Cardiac septum (tissue), 1 donor: ENCODE measurements at regions of chr4 and their contacts with region 1.

Region 1: DNA sequence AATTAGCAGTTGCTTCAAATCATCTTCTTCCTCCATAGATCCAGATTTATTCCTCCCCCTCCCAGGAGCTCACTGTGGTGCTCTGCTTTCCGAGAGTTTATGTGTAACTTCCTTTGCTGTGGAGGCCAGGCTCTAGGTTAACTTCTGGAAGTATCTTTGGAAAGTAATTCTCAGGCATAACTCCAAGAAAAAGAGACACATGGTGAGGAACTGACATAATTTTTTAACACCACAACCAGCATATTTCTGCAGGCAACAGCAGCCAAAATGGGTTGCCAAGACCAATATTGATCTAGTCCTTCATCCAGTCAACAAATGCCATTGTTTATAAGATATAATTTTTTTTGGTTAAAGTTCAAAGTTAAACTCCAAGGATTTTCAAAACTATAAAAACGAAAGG is 114.5 kb upstream of the RBPJ start:
- DNase-seq: no peak

Region 2: DNA sequence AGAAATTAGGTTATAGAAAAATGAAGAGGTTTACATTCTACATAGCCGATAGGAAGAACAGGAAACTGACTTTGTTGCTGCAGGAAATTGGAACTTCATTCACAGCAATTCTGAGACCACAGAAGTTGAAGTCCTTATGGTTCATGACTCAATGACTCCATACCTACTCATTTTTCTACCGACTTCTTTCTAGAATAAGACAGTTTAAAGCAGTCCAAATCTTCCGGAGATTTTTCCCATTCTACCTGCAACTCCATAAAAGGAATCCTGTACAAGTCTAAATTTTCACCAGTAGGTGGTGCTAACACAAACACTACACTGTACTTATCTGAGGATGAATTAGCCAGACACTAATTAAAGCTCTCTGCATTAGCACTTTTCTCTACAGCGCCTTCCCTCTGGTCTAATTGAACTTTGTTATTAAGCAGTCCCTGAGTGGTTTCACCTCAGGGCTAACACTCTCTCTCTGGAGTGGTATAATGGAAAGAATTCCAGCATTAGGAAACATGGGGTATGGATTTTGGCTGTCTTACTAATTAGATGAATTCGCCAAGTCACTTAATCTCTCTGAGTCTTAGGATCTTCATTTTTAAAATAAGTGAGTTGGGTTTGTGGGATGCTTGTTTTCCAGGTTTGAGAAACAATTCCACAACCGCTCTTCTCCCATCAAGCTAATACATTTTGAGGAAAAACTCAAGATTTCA is 124.4 kb before region 1 on chr4:
- intact Hi-C with region 1: loop called (anchors 10 kb)
- DNase-seq: no peak